ENCODE measurements at regions of chr11 and their contacts with region 1.

Region 1: DNA sequence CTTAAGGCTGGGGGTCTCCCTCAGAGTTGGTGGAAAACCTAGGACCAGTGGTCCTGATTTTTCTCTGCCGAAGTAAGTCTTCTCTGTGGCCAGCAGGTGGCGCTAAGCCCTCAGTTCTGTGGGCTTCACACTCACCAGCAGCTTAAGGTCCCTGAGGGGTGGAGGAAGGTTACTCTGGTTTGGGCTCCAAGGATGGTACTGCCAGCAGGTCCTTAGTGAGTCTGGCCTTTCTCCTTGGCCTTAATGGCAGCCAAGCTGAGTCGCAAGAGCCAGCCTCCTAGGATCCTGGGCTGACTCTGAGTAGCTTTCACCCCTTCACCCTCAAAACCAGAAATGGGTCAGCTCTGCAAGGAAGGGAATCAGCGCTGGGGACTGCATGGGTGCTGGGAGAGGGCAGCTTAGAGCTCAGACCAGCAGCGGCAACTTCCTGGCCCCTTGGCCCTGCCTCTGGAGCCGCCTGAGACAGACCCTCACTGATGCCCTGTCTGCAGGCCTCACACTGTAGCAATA is 4.4 kb downstream of the KCNJ11 start:
- DNase-seq: peak; percentile 65 to 82 (median 67)
- H3K4me3 ChIP-seq: no peak overlapping the region
- H3K4me3 Mint-ChIP-seq: peak overlapping the region in 1 of 7 donors; percentile 28
- H3K27ac ChIP-seq: no peak overlapping the region
- H3K27ac Mint-ChIP-seq: no peak overlapping the region
- H3K4me1 ChIP-seq: no peaks in the 10 kb centered on the region
- H3K4me1 Mint-ChIP-seq: peaks cover 0 to 4% (median 0%) of the 10 kb centered on the region in 3 donors
- H3K27me3 ChIP-seq: no peaks in the 10 kb centered on the region
- H3K27me3 Mint-ChIP-seq: no peaks in the 10 kb centered on the region

Region 2: GRCh38 chr11:17171916-17172315 is 212.1 kb before region 1 on chr11:
- CTCF ChIA-PET with region 1: no interaction called
- POLR2A ChIA-PET with region 1: no interaction called
- DNase-seq: no peak
- H3K4me3 ChIP-seq: no peak overlapping the region
- H3K4me3 Mint-ChIP-seq: no peak overlapping the region
- H3K27ac ChIP-seq: no peak overlapping the region
- H3K27ac Mint-ChIP-seq: peak overlapping the region in 1 of 8 donors; percentile 21
- H3K4me1 ChIP-seq: peaks cover 3% of the 10 kb centered on the region
- H3K4me1 Mint-ChIP-seq: peaks cover 23 to 41% (median 23%) of the 10 kb centered on the region in 3 donors
- H3K27me3 ChIP-seq: no peaks in the 10 kb centered on the region
- H3K27me3 Mint-ChIP-seq: no peaks in the 10 kb centered on the region

Region 3: DNA sequence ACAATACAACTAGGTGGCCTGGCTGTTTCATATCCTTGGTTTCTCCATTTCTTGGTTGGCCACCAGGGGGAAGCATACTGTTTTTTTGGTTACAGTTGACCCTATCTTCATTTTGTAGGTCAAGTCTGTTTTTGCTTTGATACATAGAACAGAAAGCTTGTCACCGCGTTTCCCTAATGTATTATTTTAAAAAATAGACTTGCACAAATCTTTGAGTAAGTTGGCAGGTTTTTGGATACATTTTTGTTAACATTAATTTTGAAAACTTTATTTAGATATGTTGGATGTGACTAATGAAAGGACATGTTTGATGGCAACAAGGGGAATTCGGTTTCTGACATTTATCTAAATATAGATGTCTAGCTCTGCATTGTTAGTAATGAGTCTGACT is 29.5 kb before region 1 on chr11:
- CTCF ChIA-PET with region 1: interaction called, 12 read pairs
- POLR2A ChIA-PET with region 1: interaction called, 13 read pairs
- DNase-seq: peak; percentile 28 to 72 (median 59)
- H3K4me3 ChIP-seq: no peak overlapping the region
- H3K4me3 Mint-ChIP-seq: peak overlapping the region; percentile 90 to 97 (median 93)
- H3K27ac ChIP-seq: no peak overlapping the region
- H3K27ac Mint-ChIP-seq: peak overlapping the region in 7 of 8 donors; percentile 74 to 97 (median 91)
- H3K4me1 ChIP-seq: peaks cover 15% of the 10 kb centered on the region
- H3K4me1 Mint-ChIP-seq: peaks cover 30 to 44% (median 31%) of the 10 kb centered on the region in 3 donors
- H3K27me3 ChIP-seq: no peaks in the 10 kb centered on the region
- H3K27me3 Mint-ChIP-seq: no peaks in the 10 kb centered on the region

Region 4: GRCh38 chr11:17366495-17366894 is 17.6 kb before region 1 on chr11:
- CTCF ChIA-PET with region 1: interaction called, 19 read pairs
- POLR2A ChIA-PET with region 1: no interaction called
- DNase-seq: no peak
- H3K4me3 ChIP-seq: no peak overlapping the region
- H3K4me3 Mint-ChIP-seq: no peak overlapping the region
- H3K27ac ChIP-seq: no peak overlapping the region
- H3K27ac Mint-ChIP-seq: no peak overlapping the region
- H3K4me1 ChIP-seq: no peaks in the 10 kb centered on the region
- H3K4me1 Mint-ChIP-seq: no peaks in the 10 kb centered on the region
- H3K27me3 ChIP-seq: no peaks in the 10 kb centered on the region
- H3K27me3 Mint-ChIP-seq: no peaks in the 10 kb centered on the region

Region 5: GRCh38 chr11:17400048-17400775 is 16.2 kb after region 1 on chr11:
- CTCF ChIA-PET with region 1: interaction called, 14 read pairs
- POLR2A ChIA-PET with region 1: no interaction called
- DNase-seq: no peak
- H3K4me3 ChIP-seq: no peak overlapping the region
- H3K4me3 Mint-ChIP-seq: no peak overlapping the region
- H3K27ac ChIP-seq: no peak overlapping the region
- H3K27ac Mint-ChIP-seq: no peak overlapping the region
- H3K4me1 ChIP-seq: no peaks in the 10 kb centered on the region
- H3K4me1 Mint-ChIP-seq: peaks cover 0 to 1% (median 0%) of the 10 kb centered on the region in 3 donors
- H3K27me3 ChIP-seq: no peaks in the 10 kb centered on the region
- H3K27me3 Mint-ChIP-seq: peaks cover 0 to 7% of the 10 kb centered on the region in 2 donors

Region 6: GRCh38 chr11:17432002-17432401 is 47.9 kb after region 1 on chr11:
- CTCF ChIA-PET with region 1: no interaction called
- POLR2A ChIA-PET with region 1: no interaction called
- DNase-seq: no peak
- H3K4me3 ChIP-seq: no peak overlapping the region
- H3K4me3 Mint-ChIP-seq: no peak overlapping the region
- H3K27ac ChIP-seq: no peak overlapping the region
- H3K27ac Mint-ChIP-seq: peak overlapping the region in 1 of 8 donors; percentile 87
- H3K4me1 ChIP-seq: no peaks in the 10 kb centered on the region
- H3K4me1 Mint-ChIP-seq: no peaks in the 10 kb centered on the region
- H3K27me3 ChIP-seq: no peaks in the 10 kb centered on the region
- H3K27me3 Mint-ChIP-seq: peaks cover 6 to 26% of the 10 kb centered on the region in 2 donors

Region 7: GRCh38 chr11:17504330-17505107 is 120.5 kb after region 1 on chr11:
- CTCF ChIA-PET with region 1: interaction called, 21 read pairs
- POLR2A ChIA-PET with region 1: no interaction called
- DNase-seq: peak; percentile 59 to 81 (median 64)
- H3K4me3 ChIP-seq: no peak overlapping the region
- H3K4me3 Mint-ChIP-seq: no peak overlapping the region
- H3K27ac ChIP-seq: no peak overlapping the region
- H3K27ac Mint-ChIP-seq: peak overlapping the region in 2 of 8 donors; percentile 6 to 72
- H3K4me1 ChIP-seq: no peaks in the 10 kb centered on the region
- H3K4me1 Mint-ChIP-seq: no peaks in the 10 kb centered on the region
- H3K27me3 ChIP-seq: no peaks in the 10 kb centered on the region
- H3K27me3 Mint-ChIP-seq: peaks cover 5 to 13% of the 10 kb centered on the region in 2 donors

Region 8: DNA sequence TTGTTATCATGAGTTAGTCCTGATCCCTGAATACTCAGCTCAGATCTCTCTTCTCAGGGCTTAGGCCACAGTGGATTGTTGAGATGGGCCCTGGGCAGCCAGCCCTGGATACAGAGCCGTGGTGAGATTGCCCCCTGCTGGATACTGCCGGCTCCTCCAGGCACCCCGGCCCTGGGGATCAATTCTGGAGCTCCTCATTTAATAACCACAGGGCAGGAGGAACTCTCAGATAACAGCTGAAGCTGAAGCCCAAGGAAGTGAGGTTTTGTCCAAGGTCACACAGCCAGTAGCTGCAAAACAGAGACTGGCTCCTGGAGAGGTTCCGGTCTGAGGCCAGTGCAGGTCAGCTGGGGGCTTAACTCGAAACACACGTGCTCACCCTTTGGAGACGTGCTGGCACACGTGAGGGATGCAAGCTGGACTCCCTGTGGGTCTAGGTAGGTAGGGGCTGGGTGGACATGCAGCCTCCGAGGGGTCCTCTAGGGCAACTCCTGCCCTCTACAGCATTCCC is 144.2 kb after region 1 on chr11:
- CTCF ChIA-PET with region 1: interaction called, 13 read pairs
- POLR2A ChIA-PET with region 1: no interaction called
- DNase-seq: peak in 3 of 5 donors; percentile 11 to 19 (median 12)
- H3K4me3 ChIP-seq: no peak overlapping the region
- H3K4me3 Mint-ChIP-seq: no peak overlapping the region
- H3K27ac ChIP-seq: no peak overlapping the region
- H3K27ac Mint-ChIP-seq: no peak overlapping the region
- H3K4me1 ChIP-seq: no peaks in the 10 kb centered on the region
- H3K4me1 Mint-ChIP-seq: no peaks in the 10 kb centered on the region
- H3K27me3 ChIP-seq: no peaks in the 10 kb centered on the region
- H3K27me3 Mint-ChIP-seq: peaks cover 3 to 13% of the 10 kb centered on the region in 2 donors